ENCODE measurements at regions of chr9 and their contacts with region 1.

Region 1: DNA sequence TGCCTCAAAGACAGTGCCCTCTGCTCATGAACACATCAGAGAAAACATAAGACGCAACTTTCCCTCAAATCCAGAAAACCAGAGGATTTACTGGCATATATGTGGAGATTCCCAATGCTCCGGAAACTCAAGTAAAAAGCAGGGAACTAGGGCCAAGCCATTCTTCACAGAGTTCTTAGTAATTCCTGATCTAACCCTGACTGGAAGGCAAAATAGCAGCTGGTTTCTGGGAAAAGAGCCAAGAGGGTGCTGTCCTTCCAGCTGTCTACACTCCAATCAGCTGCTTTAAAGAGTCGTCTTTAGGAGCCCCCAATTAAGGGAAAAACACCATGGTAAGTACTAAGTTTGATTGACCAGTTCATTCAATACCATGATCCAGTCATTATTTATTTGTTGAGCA is 49.6 kb downstream of the GNA14 start:
- DNase-seq: peak in 4 of 5 donors; percentile 31 to 59 (median 54)
- ATAC-seq: peak in 3 of 4 donors; percentile 72 to 90 (median 83)
- H3K4me3 ChIP-seq: no peak overlapping the region
- H3K27ac ChIP-seq: peak overlapping the region in 10 of 12 donors; percentile 25 to 80 (median 62)
- H3K4me1 ChIP-seq: peaks cover 0 to 58% (median 34%) of the 10 kb centered on the region in 12 donors
- H3K27me3 ChIP-seq: no peaks in the 10 kb centered on the region
- CTCF ChIP-seq: no peak
- POLR2A ChIP-seq: no peak

Region 2: DNA sequence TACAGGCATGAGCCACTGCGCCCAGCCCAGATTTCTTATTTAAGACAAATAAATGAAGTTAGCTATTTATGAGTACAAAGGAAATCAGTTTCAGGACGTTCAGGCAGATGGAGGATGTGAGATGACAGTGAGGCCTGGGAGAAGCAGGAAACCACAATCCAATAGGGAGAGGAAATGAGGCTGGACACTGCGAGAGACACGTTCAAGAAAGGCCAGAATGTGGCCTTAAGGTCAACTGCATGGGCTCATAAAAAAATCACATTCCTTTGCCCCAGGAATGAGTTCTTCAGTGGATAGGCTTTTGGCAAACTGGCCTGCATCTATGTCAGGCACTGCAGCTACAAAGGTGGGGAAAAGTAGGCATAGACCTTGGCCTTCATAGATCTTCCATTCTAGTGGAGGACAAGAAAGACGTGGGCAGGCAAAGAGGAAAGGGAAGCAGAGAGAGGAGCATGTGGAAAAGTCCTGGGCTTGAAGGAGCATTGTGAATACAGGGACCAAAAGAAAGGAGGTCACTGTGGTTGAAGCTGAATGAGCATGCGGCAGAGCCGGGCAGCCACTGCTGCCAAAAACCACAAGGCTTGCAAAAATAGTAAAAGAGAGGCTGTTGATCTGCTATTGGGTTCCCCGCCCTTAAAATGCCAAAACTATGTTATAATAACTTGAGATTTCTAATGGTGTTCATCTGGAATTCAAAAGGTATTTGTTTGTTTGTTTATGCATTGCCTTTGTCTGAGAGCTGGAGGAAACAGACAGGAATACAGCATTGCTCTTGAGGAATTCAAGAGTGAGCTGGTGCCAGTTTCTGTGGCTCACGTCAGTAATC is 83.4 kb before region 1 on chr9:
- intact Hi-C with region 1: loop called in 3 of 10 experiments (anchors 2 to 5 kb)
- DNase-seq: peak in 4 of 5 donors; percentile 44 to 67 (median 54)
- ATAC-seq: peak; percentile 75 to 94 (median 92)
- H3K4me3 ChIP-seq: no peak overlapping the region
- H3K27ac ChIP-seq: peak overlapping the region; percentile 29 to 84 (median 71)
- H3K4me1 ChIP-seq: peaks cover 0 to 37% (median 20%) of the 10 kb centered on the region in 12 donors
- H3K27me3 ChIP-seq: no peaks in the 10 kb centered on the region
- CTCF ChIP-seq: no peak
- POLR2A ChIP-seq: no peak

Region 3: GRCh38 chr9:77521091-77521490 is 77.4 kb before region 1 on chr9:
- intact Hi-C with region 1: loop called in 2 of 10 experiments (anchors 2 to 5 kb)
- DNase-seq: peak in 4 of 5 donors; percentile 40 to 73 (median 54)
- ATAC-seq: peak in 1 of 4 donors; percentile 62
- H3K4me3 ChIP-seq: no peak overlapping the region
- H3K27ac ChIP-seq: peak overlapping the region in 5 of 12 donors; percentile 2 to 55 (median 28)
- H3K4me1 ChIP-seq: peaks cover 0 to 18% (median 0%) of the 10 kb centered on the region in 12 donors
- H3K27me3 ChIP-seq: no peaks in the 10 kb centered on the region
- CTCF ChIP-seq: no peak
- POLR2A ChIP-seq: no peak

Region 4: DNA sequence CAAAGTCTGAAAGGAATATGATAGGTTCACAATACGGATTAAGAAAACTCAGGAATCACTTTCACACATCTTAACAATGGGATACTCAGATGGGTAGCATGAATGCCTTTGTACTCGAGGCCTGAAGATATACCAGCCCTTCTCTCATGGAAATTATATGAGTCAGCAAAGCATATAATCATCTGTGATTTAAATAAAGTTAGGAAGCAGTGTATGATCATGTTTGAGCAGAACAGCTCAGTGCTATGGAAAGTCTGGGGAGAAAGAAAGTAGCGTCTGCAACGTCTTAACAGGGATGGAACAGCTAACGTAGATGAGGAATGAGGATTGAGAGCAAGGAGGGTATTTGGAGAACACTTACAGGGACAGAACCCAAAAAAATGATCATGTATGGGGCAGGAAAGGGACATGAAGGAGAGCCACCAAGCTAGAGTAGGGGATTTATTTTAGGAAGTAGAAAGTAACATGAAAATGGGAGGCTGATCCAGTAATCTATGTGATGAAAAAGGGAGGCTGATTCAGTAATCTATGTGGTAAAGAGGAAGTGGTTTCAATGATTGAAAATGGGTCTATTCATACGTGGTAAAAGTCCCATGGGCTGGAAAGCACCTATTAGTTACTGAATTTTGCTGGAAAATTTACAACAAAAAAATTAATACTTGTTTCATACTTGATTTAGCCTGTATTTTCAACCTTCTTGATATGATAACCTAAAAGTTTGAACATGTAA is 36.3 kb before region 1 on chr9:
- intact Hi-C with region 1: no loop called
- DNase-seq: no peak
- ATAC-seq: no peak
- H3K4me3 ChIP-seq: no peak overlapping the region
- H3K27ac ChIP-seq: no peak overlapping the region
- H3K4me1 ChIP-seq: peaks cover 0 to 19% (median 0%) of the 10 kb centered on the region in 12 donors
- H3K27me3 ChIP-seq: no peaks in the 10 kb centered on the region
- CTCF ChIP-seq: no peak
- POLR2A ChIP-seq: no peak

Measured in heart left ventricle (tissue), 16 donors.